Panc1 (cell line): ENCODE measurements at regions of chr19 and their contacts with region 1.

Region 1: DNA sequence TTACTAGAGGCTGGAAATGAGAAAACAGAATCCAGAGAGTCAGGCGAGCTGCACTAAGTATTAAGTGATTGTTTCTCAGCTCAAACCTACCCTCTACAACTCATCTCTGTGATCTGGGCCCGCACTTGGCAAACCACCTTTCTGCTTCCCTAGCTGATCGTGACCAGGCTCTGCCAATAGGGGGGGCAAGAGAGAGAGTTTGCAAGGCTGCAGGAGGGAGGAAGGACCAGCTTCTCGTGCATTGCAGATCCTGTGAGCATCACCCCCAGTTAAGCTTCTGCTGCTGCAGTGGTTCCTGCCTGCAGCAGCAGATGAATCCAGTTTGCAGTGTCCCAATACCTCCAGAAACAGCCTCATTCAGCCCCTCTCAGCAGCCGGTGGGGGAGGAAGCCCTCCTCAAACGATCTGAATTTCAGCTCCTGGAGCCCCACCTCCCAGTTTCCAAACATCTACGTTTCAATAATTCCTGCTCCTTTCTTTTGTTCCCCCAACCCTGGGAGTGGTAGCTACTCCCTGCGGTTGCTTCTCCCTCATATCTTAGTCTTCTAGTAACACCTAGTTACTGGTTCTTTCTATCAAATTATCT is 20.0 kb downstream of the XRCC1 start:
- DNase-seq: peak; percentile 53
- ATAC-seq: peak; percentile 86
- H3K4me3 ChIP-seq: no peak overlapping the region
- H3K27ac ChIP-seq: no peak overlapping the region
- H3K4me1 ChIP-seq: no peaks in the 10 kb centered on the region
- H3K27me3 ChIP-seq: no peaks in the 10 kb centered on the region
- CTCF ChIP-seq: peak; percentile 86

Region 2: DNA sequence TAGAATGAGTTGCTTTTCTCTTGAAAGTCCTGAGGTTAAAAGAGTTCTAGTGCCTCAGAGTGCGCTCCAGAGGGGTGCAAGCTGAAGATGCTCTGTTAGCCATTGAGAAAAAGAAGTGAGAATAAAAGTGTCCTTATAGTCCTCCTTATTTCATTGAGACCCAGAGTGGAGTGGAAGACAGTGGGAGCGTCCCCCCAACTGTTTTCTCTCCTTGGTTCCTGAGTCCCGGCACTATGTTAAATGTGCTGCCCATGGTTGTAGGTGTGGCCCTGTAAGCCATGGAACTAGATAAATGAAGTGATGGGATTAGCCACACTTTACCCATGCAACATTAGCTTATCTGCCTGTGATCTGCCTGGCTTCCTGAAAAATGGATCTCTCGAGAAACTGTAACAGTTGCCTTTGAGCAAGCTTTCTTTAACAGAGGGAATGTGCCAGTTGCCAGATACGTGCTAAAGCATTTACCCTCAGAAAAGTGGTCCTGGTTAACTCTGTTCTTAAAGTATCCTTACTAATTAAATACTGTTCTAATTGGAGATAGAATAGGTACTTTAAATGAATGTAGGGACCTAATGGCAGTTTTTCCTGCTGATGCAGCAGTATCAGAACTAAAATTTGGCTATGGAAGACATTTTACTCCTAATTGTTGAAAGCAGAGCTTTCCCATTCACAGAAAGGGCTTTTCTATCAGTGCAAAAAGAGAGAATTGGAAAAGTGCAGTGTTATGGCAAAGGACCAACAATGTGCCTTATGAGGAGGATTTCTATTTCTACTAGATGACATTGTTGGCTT is 264.5 kb before region 1 on chr19:
- CTCF ChIA-PET with region 1: no interaction called
- POLR2A ChIA-PET with region 1: interaction called, 11 read pairs
- in situ Hi-C with region 1: no loop called
- intact Hi-C with region 1: no loop called
- DNase-seq: no peak
- ATAC-seq: no peak
- H3K4me3 ChIP-seq: no peak overlapping the region
- H3K27ac ChIP-seq: no peak overlapping the region
- H3K4me1 ChIP-seq: no peaks in the 10 kb centered on the region
- H3K27me3 ChIP-seq: no peaks in the 10 kb centered on the region
- CTCF ChIP-seq: no peak

Region 3: GRCh38 chr19:43594710-43595604 is 39.7 kb after region 1 on chr19:
- CTCF ChIA-PET with region 1: interaction called, 10 read pairs
- POLR2A ChIA-PET with region 1: interaction called, 3 read pairs
- in situ Hi-C with region 1: no loop called
- intact Hi-C with region 1: no loop called
- DNase-seq: no peak
- ATAC-seq: 0 out of 2 replicates have a peak, but pooled peaks have one; percentile 19
- H3K4me3 ChIP-seq: peak overlapping the region; percentile 82 to 90
- H3K27ac ChIP-seq: peak overlapping the region; percentile 88
- H3K4me1 ChIP-seq: peaks cover 7% of the 10 kb centered on the region; the same call in 1 of the 2 replicates
- H3K27me3 ChIP-seq: no peaks in the 10 kb centered on the region
- CTCF ChIP-seq: peak; percentile 86